ENCODE measurements at regions of chr5 and their contacts with region 1.

Region 1: DNA sequence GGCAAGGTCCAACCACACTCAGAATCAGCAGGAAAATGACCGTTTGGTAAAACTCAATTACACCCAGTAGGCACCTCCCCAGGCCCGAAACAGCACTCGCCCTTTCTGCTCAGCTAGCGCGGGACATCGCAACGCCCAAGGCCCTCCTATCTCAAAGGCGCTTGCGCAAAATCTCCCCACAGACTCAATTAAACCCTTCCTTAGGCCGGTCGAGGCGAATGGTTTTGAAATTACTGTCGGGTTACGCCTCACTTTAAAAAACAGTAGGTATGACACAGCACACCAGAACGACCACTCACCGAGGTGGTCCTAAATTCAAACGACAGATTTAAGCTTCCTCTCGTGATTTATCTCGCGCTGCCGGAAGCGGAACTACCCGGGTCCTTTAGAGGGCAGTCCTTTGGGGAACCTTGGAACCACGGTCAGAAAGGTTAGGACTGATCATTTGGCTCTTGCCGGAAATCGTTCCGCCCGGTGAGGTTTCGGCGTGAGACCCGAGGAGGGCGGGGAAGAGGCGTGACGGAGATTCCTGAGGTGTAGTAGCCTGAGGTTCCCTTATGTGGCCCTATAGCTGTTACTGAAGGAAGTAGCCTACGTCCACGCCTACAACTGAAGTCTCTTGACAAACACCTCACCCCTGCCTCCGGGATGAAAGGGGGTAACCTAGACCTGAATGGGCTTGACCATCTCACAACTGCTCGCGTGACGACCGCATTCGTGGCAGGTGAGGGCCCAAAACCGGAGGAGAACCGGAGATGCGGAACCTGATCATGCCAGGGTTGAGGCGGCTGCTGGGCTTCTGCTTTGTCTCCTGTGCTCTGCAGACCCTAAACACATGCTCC is at the starts of genes GIN1 and PPIP5K2:
- DNase-seq: peak; percentile 99
- H3K4me3 Mint-ChIP-seq: peak within 1 kb of the TSS; percentile 83
- H3K27ac Mint-ChIP-seq: peak within 1 kb of the TSS; percentile 98
- H3K4me1 Mint-ChIP-seq: peaks cover 23% of the 10 kb centered on the region
- H3K27me3 Mint-ChIP-seq: no peaks in the 10 kb centered on the region
- CTCF ChIP-seq: no peak
- total RNA-seq, gene GIN1: 12.1 and 16.2 TPM in 2 replicates
- total RNA-seq, gene PPIP5K2: 29.7 and 35.5 TPM in 2 replicates

Region 2: DNA sequence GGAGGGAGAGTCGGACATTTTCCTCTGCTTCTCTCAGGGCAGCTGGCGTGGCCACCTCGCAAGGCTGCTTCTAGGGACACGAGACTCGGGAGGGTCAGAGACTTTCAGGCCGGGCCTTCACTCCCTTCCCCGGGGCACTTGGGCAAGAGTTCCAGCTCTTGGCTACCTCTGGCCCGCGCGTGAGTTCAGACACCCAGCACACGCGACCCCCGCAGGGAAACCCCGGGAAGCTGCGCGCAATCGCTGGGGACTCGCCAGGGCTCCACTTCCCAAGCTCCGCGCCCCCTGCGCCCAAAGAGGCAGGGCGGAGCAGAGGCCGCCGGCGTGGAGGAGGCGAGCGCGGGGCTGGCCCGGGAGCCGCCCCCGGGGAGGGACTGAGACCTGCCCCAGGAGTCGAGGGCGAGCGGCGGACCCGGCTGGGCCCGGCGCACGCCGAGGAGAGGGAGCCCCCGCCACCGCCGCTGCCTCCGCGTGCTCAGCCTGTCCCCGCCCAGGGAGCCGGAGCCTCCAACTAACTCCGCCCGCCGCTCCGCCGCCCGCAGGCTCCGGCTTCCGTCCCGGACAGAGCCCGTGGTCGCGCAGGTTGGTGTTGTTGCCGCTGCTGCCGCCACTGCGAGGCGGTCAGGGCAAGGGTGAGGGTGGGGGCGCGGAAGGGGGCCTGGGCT is 365.1 kb before region 1 on chr5 and contains the start of gene PAM:
- CTCF ChIA-PET with region 1: no interaction called
- POLR2A ChIA-PET with region 1: interaction called, 43 read pairs
- intact Hi-C with region 1: no loop called
- DNase-seq: peak; percentile 75
- H3K4me3 Mint-ChIP-seq: peak within 1 kb of the TSS; percentile 98
- H3K27ac Mint-ChIP-seq: peak within 1 kb of the TSS; percentile 88
- H3K4me1 Mint-ChIP-seq: peaks cover 22% of the 10 kb centered on the region
- H3K27me3 Mint-ChIP-seq: no peaks in the 10 kb centered on the region
- CTCF ChIP-seq: no peak
- total RNA-seq, gene PAM: 60.3 and 64.3 TPM in 2 replicates

Region 3: DNA sequence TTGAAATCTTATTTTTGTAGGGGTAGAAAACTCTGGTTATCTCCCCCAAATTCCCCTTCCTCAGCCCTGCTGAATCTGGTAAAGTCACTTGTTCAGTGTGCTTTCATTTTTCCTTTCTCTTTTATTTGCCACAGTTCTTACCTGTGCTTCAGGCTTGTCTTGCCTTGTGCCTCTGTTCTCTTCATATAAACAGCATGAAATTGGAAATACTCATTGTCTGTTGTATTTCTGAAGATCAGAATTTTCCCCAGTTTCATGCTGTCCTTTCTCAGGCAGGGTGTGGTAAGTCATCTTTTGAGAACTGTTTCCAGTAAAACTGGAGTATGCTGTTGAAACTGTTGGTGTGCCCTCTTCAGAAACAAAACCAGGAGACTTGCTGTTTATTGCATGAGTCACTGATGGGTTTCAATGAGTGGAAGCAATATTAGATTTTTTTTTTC is 357.9 kb before region 1 on chr5:
- CTCF ChIA-PET with region 1: no interaction called
- POLR2A ChIA-PET with region 1: interaction called, 43 read pairs
- intact Hi-C with region 1: no loop called
- DNase-seq: peak; percentile 69
- H3K4me3 Mint-ChIP-seq: peak overlapping the region; percentile 66
- H3K27ac Mint-ChIP-seq: peak overlapping the region; percentile 81
- H3K4me1 Mint-ChIP-seq: peaks cover 46% of the 10 kb centered on the region
- H3K27me3 Mint-ChIP-seq: no peaks in the 10 kb centered on the region
- CTCF ChIP-seq: no peak

Region 4: DNA sequence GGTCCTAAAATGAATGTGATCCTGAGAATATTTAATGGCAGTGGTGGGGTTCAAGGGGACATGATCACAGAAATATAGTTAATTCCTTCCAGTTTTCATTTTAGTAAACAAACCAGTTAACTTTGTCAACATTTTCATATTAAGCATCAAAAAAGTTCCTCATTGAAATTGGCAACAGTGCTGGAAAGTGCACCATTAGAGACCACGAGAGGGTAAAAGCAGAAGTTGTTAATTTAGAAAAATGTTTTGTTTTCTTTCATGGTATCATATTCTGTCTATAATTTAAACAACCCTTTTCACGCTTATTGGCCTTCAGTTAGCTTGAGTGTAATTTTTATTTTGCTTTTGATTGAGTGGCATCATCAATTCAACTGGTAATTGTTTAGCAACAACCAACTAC is 11.9 kb before region 1 on chr5:
- CTCF ChIA-PET with region 1: no interaction called
- POLR2A ChIA-PET with region 1: interaction called, 29 read pairs
- intact Hi-C with region 1: no loop called
- DNase-seq: no peak
- H3K4me3 Mint-ChIP-seq: no peak overlapping the region
- H3K27ac Mint-ChIP-seq: no peak overlapping the region
- H3K4me1 Mint-ChIP-seq: no peaks in the 10 kb centered on the region
- H3K27me3 Mint-ChIP-seq: no peaks in the 10 kb centered on the region
- CTCF ChIP-seq: no peak

Region 5: DNA sequence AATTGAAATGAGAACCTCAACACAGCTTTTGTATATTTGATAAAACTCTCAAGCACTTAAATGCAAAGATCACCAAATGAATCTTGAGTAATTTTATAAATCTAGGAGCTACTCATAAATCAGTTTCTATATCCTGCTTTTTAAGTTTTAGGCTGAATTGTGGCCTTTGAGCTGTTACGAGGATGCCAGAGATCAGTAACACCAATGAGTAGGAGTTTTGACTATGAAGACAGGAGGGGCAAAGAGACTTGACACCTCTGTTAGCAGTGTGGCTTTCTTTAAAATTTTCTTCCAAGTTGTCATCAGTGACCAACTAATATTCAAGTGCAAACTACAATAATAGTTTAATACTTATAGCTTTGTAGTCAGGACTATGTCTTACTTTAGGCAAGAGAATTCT is 12.7 kb after region 1 on chr5:
- CTCF ChIA-PET with region 1: interaction called, 3 read pairs
- POLR2A ChIA-PET with region 1: interaction called, 18 read pairs
- intact Hi-C with region 1: no loop called
- DNase-seq: no peak
- H3K4me3 Mint-ChIP-seq: no peak overlapping the region
- H3K27ac Mint-ChIP-seq: no peak overlapping the region
- H3K4me1 Mint-ChIP-seq: no peaks in the 10 kb centered on the region
- H3K27me3 Mint-ChIP-seq: no peaks in the 10 kb centered on the region
- CTCF ChIP-seq: no peak

Region 6: GRCh38 chr5:103139264-103139865 is 19.4 kb after region 1 on chr5:
- CTCF ChIA-PET with region 1: interaction called, 12 read pairs
- POLR2A ChIA-PET with region 1: interaction called, 18 read pairs
- intact Hi-C with region 1: no loop called
- DNase-seq: peak; percentile 87
- H3K4me3 Mint-ChIP-seq: no peak overlapping the region
- H3K27ac Mint-ChIP-seq: no peak overlapping the region
- H3K4me1 Mint-ChIP-seq: no peaks in the 10 kb centered on the region
- H3K27me3 Mint-ChIP-seq: no peaks in the 10 kb centered on the region
- CTCF ChIP-seq: peak; percentile 95

Region 7: GRCh38 chr5:103258368-103258956 is 138.5 kb after region 1 on chr5 and contains the start of gene MACIR:
- CTCF ChIA-PET with region 1: no interaction called
- POLR2A ChIA-PET with region 1: interaction called, 24 read pairs
- intact Hi-C with region 1: no loop called
- DNase-seq: peak; percentile 98
- H3K4me3 Mint-ChIP-seq: peak within 1 kb of the TSS; percentile 88
- H3K27ac Mint-ChIP-seq: peak within 1 kb of the TSS; percentile 9
- H3K4me1 Mint-ChIP-seq: peaks cover 31% of the 10 kb centered on the region
- H3K27me3 Mint-ChIP-seq: no peaks in the 10 kb centered on the region
- CTCF ChIP-seq: no peak
- total RNA-seq, gene MACIR: 6.6 and 8.9 TPM in 2 replicates

Region 8: DNA sequence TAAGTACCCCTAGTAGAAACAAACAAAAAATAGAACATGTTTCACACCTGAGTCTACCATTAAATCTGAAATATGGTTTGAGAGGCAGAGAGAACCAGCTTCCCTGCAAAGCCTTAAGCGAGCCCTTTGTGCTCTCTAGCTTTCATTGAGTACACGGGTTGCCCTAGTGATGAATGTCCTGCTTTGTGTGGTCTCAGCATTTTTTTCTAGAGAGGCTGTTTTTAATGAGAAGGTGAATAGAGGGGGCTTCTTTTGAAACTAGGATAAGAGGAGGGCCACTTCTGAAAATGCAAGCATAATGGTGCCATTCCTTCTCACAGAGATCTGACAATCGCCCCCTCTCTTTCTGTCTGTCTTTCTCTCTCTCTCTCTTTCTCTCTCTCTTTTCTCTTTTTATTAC is 269.9 kb after region 1 on chr5:
- CTCF ChIA-PET with region 1: no interaction called
- POLR2A ChIA-PET with region 1: no interaction called
- intact Hi-C with region 1: no loop called
- DNase-seq: no peak
- H3K4me3 Mint-ChIP-seq: no peak overlapping the region
- H3K27ac Mint-ChIP-seq: no peak overlapping the region
- H3K4me1 Mint-ChIP-seq: no peaks in the 10 kb centered on the region
- H3K27me3 Mint-ChIP-seq: peaks cover 16% of the 10 kb centered on the region
- CTCF ChIP-seq: no peak

Measured in MCF 10A (cell line).